Breast epithelium (tissue), 4 donors: ENCODE measurements at regions of chr12 and their contacts with region 1.

Region 1: DNA sequence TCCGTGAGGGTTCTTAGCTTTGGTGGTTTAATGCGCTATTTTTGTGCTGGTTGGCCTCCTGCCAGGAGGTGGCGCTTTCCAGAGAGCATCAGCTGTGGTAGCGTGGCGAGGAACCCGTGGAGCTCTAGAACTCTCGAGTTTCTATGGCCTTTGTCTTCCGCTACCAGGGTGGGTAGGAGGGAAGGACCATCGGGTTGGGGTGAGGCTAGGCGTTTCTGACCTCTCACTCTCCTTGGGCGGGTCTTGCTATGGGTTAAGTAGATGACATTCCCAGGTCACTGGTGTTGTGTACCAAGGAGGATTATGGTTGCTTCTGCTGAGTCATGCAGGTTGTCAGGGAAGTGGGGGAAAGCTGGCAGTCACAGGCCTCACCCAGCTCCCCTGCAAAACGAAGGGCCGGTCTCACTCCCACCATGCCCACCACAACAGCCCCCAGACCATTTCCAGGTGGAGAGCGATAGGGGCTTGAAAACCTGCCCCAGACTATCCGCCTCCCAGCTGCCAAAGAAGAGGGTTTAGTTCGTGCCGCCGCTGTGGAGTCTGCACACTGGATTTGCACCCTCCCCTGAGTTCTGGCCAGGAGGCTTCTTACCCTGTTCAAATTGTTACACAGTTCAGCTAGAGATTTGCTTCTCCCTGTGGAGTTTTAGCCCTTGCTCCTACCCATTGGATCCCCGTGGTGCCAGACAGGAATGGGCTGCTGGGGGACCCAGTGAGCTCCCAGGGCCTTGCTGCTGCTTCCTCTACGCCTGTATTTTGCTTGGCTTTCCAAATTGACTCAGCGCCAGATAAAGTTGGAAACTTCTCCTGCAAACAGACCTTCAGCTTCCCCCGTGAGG is 21.9 kb downstream of the RNFT2 start:
- DNase-seq: no peak
- H3K4me3 ChIP-seq: no peak overlapping the region
- H3K27ac ChIP-seq: no peak overlapping the region
- H3K4me1 ChIP-seq: no peaks in the 10 kb centered on the region
- H3K27me3 ChIP-seq: no peaks in the 10 kb centered on the region
- CTCF ChIP-seq: no peak
- POLR2A ChIP-seq: no peak

Region 2: DNA sequence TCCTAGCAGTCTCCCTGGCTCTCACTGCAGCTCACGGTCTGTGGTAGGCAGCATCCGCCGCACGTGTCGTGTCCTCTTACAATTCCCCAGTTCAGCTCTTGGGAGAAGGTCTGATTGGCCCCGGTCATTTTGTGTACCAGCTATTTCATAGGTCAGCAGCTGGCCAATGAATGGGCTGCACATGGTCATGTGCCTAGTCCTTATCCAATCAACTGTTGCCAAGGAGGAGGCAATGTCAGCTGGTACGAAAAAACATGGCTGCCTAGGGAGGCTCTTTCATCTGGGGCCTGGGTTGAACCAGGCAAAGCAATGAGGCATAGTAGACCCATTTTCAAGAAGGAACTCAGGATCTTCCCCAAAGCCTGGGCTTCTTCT is 24.2 kb after region 1 on chr12:
- intact Hi-C with region 1: loop called (anchors 1 kb)
- DNase-seq: no peak
- H3K4me3 ChIP-seq: no peak overlapping the region
- H3K27ac ChIP-seq: no peak overlapping the region
- H3K4me1 ChIP-seq: no peaks in the 10 kb centered on the region
- H3K27me3 ChIP-seq: no peaks in the 10 kb centered on the region
- CTCF ChIP-seq: no peak
- POLR2A ChIP-seq: no peak

Region 3: DNA sequence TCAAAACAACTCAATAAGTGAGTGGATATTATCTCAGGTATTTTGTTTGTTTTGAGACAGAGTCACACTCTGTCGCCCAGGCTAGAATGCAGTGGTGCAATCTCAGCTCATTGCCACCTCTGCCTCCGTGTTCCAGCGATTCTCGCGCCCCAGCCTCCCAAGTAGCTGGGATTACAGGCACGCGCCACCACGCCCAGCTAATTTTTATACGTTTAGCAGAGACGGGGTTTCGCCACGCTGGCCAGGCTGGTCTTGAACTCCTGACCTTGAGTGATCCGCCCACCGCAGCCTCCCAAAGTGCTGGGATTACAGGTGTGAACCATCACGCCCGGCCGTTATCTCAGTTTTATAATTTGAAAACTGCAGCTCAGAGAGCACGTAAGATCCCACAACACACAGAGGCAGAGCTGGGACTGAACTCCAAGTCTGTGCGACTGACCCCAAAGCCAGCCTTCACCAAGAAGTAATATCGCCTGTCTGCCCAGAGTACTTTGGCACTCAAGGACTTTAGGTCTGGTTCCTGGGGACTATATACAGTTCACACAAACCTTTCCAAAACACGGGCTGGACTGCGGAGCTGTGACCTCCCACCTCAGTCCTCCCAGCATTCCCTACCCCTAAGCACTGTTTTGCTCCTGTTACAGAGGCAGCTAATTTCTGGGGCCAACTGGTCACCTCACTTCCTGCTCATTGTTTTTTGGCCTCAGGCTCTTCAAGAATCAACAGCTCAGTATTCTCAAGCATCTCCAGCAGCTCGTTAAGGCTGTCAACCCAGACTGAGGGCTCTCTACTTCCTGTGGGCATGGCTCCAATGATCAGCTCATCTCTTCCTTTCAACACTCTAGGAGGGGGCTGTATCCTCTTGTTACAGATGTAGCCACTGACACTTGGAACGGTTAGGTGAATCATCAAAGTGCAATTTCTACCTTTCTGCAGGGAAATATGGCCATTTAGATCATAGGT is 316.7 kb after region 1 on chr12:
- intact Hi-C with region 1: no loop called
- DNase-seq: no peak
- H3K4me3 ChIP-seq: no peak overlapping the region
- H3K27ac ChIP-seq: peak overlapping the region; percentile 66 to 67
- H3K4me1 ChIP-seq: no peaks in the 10 kb centered on the region
- H3K27me3 ChIP-seq: no peaks in the 10 kb centered on the region
- CTCF ChIP-seq: no peak
- POLR2A ChIP-seq: no peak

Region 4: GRCh38 chr12:117452112-117452511 is 692.1 kb after region 1 on chr12:
- intact Hi-C with region 1: no loop called
- DNase-seq: no peak
- H3K4me3 ChIP-seq: no peak overlapping the region
- H3K27ac ChIP-seq: no peak overlapping the region
- H3K4me1 ChIP-seq: no peaks in the 10 kb centered on the region
- H3K27me3 ChIP-seq: no peaks in the 10 kb centered on the region
- CTCF ChIP-seq: no peak
- POLR2A ChIP-seq: no peak